CD4-positive, alpha-beta T cell (primary cell): ENCODE measurements at regions of chr3 and their contacts with region 1.

Region 1: DNA sequence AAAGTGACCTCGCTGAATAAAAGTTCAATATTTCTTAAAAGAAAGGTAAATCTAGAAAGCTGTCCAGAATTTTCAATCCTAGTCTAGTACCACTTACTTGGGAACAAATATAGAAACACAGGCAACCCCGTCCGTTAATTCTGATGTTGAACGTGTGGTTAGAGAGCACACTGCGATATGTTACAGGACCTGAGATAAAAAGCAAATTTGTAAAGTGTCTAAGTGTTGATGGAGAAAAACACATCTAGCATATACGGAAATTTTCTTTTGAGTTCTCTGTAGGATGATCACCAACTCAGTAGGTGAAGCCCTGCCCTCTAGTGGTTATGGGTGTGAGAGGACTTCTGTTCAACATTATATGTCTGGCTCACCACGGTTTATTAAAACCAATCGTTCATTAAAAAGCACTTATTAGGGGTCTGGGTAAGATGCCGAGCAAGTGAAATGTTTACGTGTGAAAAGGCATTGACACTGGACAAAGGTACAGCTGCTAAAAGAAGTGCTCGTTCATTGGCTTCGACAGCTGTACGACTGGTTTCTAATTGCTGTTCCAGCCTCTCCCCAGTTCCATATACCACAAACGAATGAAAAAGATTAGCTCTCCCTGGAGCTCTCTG is 1.0 kb upstream of the ATP2C1 start:
- DNase-seq: peak; percentile 33 to 87 (median 46)
- ATAC-seq: peak; percentile 68
- H3K4me3 ChIP-seq: peak overlapping the region; percentile 66
- H3K4me3 Mint-ChIP-seq: peak overlapping the region; percentile 98
- H3K27ac ChIP-seq: peak overlapping the region; percentile 90 to 96
- H3K27ac Mint-ChIP-seq: peak overlapping the region; percentile 96
- H3K4me1 ChIP-seq: peaks cover 7% of the 10 kb centered on the region
- H3K4me1 Mint-ChIP-seq: peaks cover 42% of the 10 kb centered on the region
- H3K27me3 ChIP-seq: no peaks in the 10 kb centered on the region
- H3K27me3 Mint-ChIP-seq: no peaks in the 10 kb centered on the region
- CTCF ChIP-seq: peak; percentile 96

Region 2: DNA sequence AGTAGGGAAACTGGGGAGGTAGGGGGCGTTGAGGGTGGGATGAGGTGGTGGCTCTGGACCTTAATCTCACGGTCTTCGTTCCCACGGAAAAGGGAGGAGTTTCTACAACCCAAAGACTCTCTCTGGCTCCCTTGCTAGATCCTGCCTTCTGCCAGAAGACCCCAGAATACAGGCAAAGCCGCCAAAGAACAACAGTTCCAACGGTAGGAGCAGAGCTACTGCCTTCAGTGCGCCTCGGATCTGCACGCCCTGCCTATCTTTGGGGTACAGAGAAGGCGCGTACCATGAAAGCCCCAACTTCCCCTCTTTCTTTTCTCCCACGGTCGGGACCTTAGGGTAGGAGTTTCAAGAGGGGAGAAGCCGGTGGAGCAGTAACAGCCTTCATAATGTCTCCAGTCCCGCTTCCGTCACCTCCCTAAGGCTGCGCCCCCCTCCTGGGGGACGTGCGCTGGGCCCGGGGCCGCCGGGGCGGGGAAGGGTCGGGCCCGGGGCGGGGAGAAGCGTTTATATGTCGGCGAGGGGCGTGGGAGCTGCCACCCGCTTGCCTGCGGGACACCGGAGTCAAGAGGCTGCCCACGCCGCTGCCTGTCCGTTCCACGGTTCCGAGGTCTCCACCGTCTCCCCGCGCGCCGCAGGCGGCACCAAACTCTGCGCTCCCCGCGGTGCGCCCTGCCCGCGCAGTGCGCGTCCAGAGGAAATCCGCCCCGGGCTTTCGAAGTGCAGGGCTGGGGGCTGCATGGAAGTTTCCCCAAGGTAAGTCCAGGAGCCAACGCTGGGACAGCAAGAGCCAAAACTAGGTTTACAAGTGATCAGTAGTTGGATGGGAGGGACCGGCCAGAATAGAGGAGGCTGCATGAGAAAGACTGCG is 376.0 kb before region 1 on chr3 and contains the start of gene COL6A6:
- CTCF ChIA-PET with region 1: no interaction called
- POLR2A ChIA-PET with region 1: no interaction called
- intact Hi-C with region 1: no loop called
- DNase-seq: no peak
- ATAC-seq: no peak
- H3K4me3 ChIP-seq: no peak within 1 kb of the TSS
- H3K4me3 Mint-ChIP-seq: no peak within 1 kb of the TSS
- H3K27ac ChIP-seq: no peak within 1 kb of the TSS
- H3K27ac Mint-ChIP-seq: no peak within 1 kb of the TSS
- H3K4me1 ChIP-seq: no peaks in the 10 kb centered on the region
- H3K4me1 Mint-ChIP-seq: no peaks in the 10 kb centered on the region
- H3K27me3 ChIP-seq: peaks cover 10 to 32% of the 10 kb centered on the region in 2 experiments
- H3K27me3 Mint-ChIP-seq: peaks cover 59% of the 10 kb centered on the region
- CTCF ChIP-seq: no peak
- total RNA-seq, gene COL6A6: not detected

Region 3: GRCh38 chr3:130699765-130700164 is 193.1 kb before region 1 on chr3:
- CTCF ChIA-PET with region 1: no interaction called
- POLR2A ChIA-PET with region 1: no interaction called
- intact Hi-C with region 1: loop called (anchors 2 to 5 kb)
- DNase-seq: peak in 3 of 14 experiments; percentile 23 to 31 (median 30)
- ATAC-seq: no peak
- H3K4me3 ChIP-seq: no peak overlapping the region
- H3K4me3 Mint-ChIP-seq: no peak overlapping the region
- H3K27ac ChIP-seq: no peak overlapping the region
- H3K27ac Mint-ChIP-seq: no peak overlapping the region
- H3K4me1 ChIP-seq: no peaks in the 10 kb centered on the region
- H3K4me1 Mint-ChIP-seq: no peaks in the 10 kb centered on the region
- H3K27me3 ChIP-seq: no peaks in the 10 kb centered on the region
- H3K27me3 Mint-ChIP-seq: no peaks in the 10 kb centered on the region
- CTCF ChIP-seq: peak; percentile 45

Region 4: GRCh38 chr3:130759699-130760338 is 133.0 kb before region 1 on chr3:
- CTCF ChIA-PET with region 1: interaction called, 9 read pairs
- POLR2A ChIA-PET with region 1: interaction called, 12 read pairs
- intact Hi-C with region 1: loop called (anchors 1 to 2 kb)
- DNase-seq: peak in 11 of 14 experiments; percentile 16 to 76 (median 33)
- ATAC-seq: peak; percentile 86
- H3K4me3 ChIP-seq: no peak overlapping the region
- H3K4me3 Mint-ChIP-seq: no peak overlapping the region
- H3K27ac ChIP-seq: no peak overlapping the region
- H3K27ac Mint-ChIP-seq: no peak overlapping the region
- H3K4me1 ChIP-seq: no peaks in the 10 kb centered on the region
- H3K4me1 Mint-ChIP-seq: no peaks in the 10 kb centered on the region
- H3K27me3 ChIP-seq: no peaks in the 10 kb centered on the region
- H3K27me3 Mint-ChIP-seq: peaks cover 29% of the 10 kb centered on the region
- CTCF ChIP-seq: peak; percentile 83

Region 5: DNA sequence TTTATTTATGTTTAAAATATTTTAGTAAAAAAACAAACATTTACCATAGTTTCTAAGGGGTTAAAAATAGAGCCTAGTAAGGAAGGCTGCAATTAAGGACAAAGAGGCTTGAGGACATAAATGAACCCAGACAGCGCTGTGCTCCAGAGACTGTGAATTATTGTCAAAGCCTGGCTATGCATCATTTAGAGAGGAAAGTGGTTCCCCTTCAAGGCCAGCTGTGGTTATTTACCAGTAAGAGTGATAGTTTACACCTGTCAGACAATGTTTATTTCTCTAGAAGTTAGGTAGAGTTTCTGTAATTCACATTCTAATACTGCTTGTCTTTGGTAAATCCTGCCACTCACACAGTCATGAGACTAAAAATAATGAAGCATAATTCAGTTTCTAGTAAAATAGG is 113.8 kb before region 1 on chr3:
- CTCF ChIA-PET with region 1: no interaction called
- POLR2A ChIA-PET with region 1: no interaction called
- intact Hi-C with region 1: no loop called
- DNase-seq: no peak
- ATAC-seq: no peak
- H3K4me3 ChIP-seq: no peak overlapping the region
- H3K4me3 Mint-ChIP-seq: no peak overlapping the region
- H3K27ac ChIP-seq: no peak overlapping the region
- H3K27ac Mint-ChIP-seq: no peak overlapping the region
- H3K4me1 ChIP-seq: no peaks in the 10 kb centered on the region
- H3K4me1 Mint-ChIP-seq: no peaks in the 10 kb centered on the region
- H3K27me3 ChIP-seq: no peaks in the 10 kb centered on the region
- H3K27me3 Mint-ChIP-seq: no peaks in the 10 kb centered on the region
- CTCF ChIP-seq: no peak

Region 6: GRCh38 chr3:130935761-130936492 is 43.1 kb after region 1 on chr3:
- CTCF ChIA-PET with region 1: no interaction called
- POLR2A ChIA-PET with region 1: interaction called, 3 read pairs
- intact Hi-C with region 1: loop called in 1 of 2 experiments (anchors 5 kb)
- DNase-seq: no peak
- ATAC-seq: no peak
- H3K4me3 ChIP-seq: no peak overlapping the region
- H3K4me3 Mint-ChIP-seq: no peak overlapping the region
- H3K27ac ChIP-seq: no peak overlapping the region
- H3K27ac Mint-ChIP-seq: no peak overlapping the region
- H3K4me1 ChIP-seq: no peaks in the 10 kb centered on the region
- H3K4me1 Mint-ChIP-seq: no peaks in the 10 kb centered on the region
- H3K27me3 ChIP-seq: no peaks in the 10 kb centered on the region
- H3K27me3 Mint-ChIP-seq: no peaks in the 10 kb centered on the region
- CTCF ChIP-seq: no peak

Region 7: DNA sequence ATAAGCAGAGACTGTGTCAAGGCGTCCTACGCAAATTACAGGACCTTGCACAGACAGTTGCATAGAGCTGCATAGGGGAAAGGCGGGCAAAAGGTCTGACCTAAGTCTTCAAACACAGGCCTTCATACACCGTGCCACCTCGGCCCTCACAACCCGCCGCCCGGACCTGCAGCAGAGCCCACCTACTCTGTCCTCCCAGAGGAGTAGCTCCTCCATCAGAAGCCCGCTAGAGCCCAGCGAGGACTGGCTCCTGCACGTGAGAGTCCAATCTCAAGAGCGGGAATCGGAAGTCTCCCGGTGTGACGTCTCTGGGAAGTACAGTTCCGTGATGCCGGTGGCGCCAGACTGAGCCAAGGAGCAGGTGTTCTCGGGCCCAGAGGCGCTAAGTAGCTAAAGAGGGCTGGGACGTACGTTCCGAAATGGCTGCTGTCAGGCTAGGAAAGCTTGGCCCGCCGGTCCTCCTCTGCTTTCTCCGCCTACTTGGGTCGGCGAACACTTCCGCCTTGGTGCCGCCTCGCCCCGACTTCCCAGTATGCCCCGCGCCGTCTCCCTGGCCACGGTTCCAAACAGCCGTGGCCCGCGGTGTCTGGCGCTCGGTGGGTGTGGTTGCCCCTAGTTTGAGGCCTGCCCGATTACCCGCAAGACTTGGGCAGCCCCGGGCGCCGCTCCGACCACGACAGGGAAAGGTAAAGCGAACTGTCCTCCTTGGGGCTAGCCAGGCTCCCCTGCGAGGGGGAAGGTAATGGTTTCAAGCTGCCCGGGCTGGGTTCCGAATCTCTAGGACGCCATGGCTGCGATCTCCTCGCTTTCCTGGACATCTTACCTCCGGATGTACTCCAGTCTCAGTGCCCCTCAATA is 133.7 kb after region 1 on chr3 and contains the starts of genes ASTE1 and NEK11:
- CTCF ChIA-PET with region 1: interaction called, 5 read pairs
- POLR2A ChIA-PET with region 1: interaction called, 32 read pairs
- intact Hi-C with region 1: loop called in 1 of 2 experiments (anchors 5 kb)
- DNase-seq: peak; percentile 85 to 96 (median 90)
- ATAC-seq: peak; percentile 97
- H3K4me3 ChIP-seq: peak within 1 kb of the TSS; percentile 66
- H3K4me3 Mint-ChIP-seq: peak within 1 kb of the TSS; percentile 93
- H3K27ac ChIP-seq: peak within 1 kb of the TSS; percentile 84 to 89
- H3K27ac Mint-ChIP-seq: peak within 1 kb of the TSS; percentile 94
- H3K4me1 ChIP-seq: peaks cover 30% of the 10 kb centered on the region
- H3K4me1 Mint-ChIP-seq: peaks cover 52% of the 10 kb centered on the region
- H3K27me3 ChIP-seq: no peaks in the 10 kb centered on the region
- H3K27me3 Mint-ChIP-seq: no peaks in the 10 kb centered on the region
- CTCF ChIP-seq: no peak
- total RNA-seq, gene ASTE1: 25.6 to 26.6 TPM
- total RNA-seq, gene NEK11: 1.6 to 4.2 TPM

Region 8: GRCh38 chr3:131502530-131503245 is 609.8 kb after region 1 on chr3 and contains the start of gene MRPL3:
- CTCF ChIA-PET with region 1: no interaction called
- POLR2A ChIA-PET with region 1: no interaction called
- intact Hi-C with region 1: loop called in 1 of 2 experiments (anchors 5 kb)
- DNase-seq: peak; percentile 72 to 93 (median 78)
- ATAC-seq: peak; percentile 89
- H3K4me3 ChIP-seq: peak within 1 kb of the TSS; percentile 71
- H3K4me3 Mint-ChIP-seq: peak within 1 kb of the TSS; percentile 98
- H3K27ac ChIP-seq: peak within 1 kb of the TSS; percentile 66 to 76
- H3K27ac Mint-ChIP-seq: peak within 1 kb of the TSS; percentile 93
- H3K4me1 ChIP-seq: peaks cover 16% of the 10 kb centered on the region
- H3K4me1 Mint-ChIP-seq: peaks cover 54% of the 10 kb centered on the region
- H3K27me3 ChIP-seq: no peaks in the 10 kb centered on the region
- H3K27me3 Mint-ChIP-seq: no peaks in the 10 kb centered on the region
- CTCF ChIP-seq: no peak
- total RNA-seq, gene MRPL3: 36.0 to 37.6 TPM

Region 9: GRCh38 chr3:132722164-132723024 is 1829.5 kb after region 1 on chr3 and contains the start of gene NPHP3:
- CTCF ChIA-PET with region 1: no interaction called
- POLR2A ChIA-PET with region 1: interaction called, 3 read pairs
- intact Hi-C with region 1: loop called in 1 of 2 experiments (anchors 10 kb)
- DNase-seq: peak; percentile 90 to 100 (median 98)
- ATAC-seq: peak; percentile 77
- H3K4me3 ChIP-seq: peak within 1 kb of the TSS; percentile 89
- H3K4me3 Mint-ChIP-seq: peak within 1 kb of the TSS; percentile 96
- H3K27ac ChIP-seq: peak within 1 kb of the TSS; percentile 43 to 46
- H3K27ac Mint-ChIP-seq: peak within 1 kb of the TSS; percentile 93
- H3K4me1 ChIP-seq: peaks cover 25% of the 10 kb centered on the region
- H3K4me1 Mint-ChIP-seq: peaks cover 50% of the 10 kb centered on the region
- H3K27me3 ChIP-seq: no peaks in the 10 kb centered on the region
- H3K27me3 Mint-ChIP-seq: no peaks in the 10 kb centered on the region
- CTCF ChIP-seq: no peak
- total RNA-seq, gene NPHP3: 25.5 to 27.4 TPM